CD14-positive monocyte (primary cell): ENCODE measurements at regions of chr10 and their contacts with region 1.

Region 1: GRCh38 chr10:30529373-30529998 is 95.5 kb downstream of the MAP3K8 start:
- DNase-seq: peak; percentile 97 to 99 (median 98)
- H3K4me3 ChIP-seq: peak overlapping the region; percentile 22 to 59 (median 24)
- H3K4me3 Mint-ChIP-seq: peak overlapping the region; percentile 71 to 85
- H3K27ac ChIP-seq: peak overlapping the region; percentile 86 to 99
- H3K27ac Mint-ChIP-seq: peak overlapping the region; percentile 97 to 99 (median 98)
- H3K4me1 ChIP-seq: peaks cover 63 to 83% of the 10 kb centered on the region in 2 donors
- H3K4me1 Mint-ChIP-seq: peaks cover 68% of the 10 kb centered on the region
- H3K27me3 ChIP-seq: no peaks in the 10 kb centered on the region
- H3K27me3 Mint-ChIP-seq: peaks cover 0 to 2% (median 0%) of the 10 kb centered on the region in 3 donors
- CTCF ChIP-seq: no peak

Region 2: DNA sequence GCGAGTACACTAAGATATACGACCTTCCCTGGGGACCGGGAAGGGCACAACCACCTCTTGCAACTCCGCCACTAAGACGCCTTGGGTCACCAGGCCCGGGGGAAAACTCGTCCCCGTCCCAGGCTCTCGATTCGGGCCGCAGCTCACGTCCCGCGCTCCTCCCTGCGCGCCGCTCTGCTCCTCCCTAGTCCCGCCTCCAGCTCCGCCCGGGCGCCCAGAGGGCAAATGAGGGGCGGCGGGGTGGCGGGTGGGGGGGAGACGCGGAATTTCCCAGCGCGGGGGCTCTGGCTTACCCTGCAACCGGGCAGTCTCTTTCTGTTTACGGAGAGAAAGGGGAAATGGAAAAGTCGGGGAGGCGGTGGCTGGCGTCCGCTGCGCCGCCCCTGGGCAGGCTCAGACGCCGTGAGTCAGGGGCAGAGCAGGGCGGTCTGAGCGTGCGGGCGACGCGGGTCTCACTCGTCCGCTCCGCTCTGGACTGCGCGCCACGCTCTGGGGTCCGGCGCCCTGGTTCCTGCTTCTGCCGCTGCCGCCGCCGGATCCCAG is 95.7 kb before region 1 on chr10 and contains the start of gene MAP3K8:
- intact Hi-C with region 1: loop called in 1 of 2 experiments (anchors 5 kb)
- DNase-seq: peak; percentile 96 to 98 (median 98)
- H3K4me3 ChIP-seq: peak within 1 kb of the TSS; percentile 96 to 100 (median 97)
- H3K4me3 Mint-ChIP-seq: peak within 1 kb of the TSS; percentile 98
- H3K27ac ChIP-seq: peak within 1 kb of the TSS; percentile 98 to 99
- H3K27ac Mint-ChIP-seq: peak within 1 kb of the TSS; percentile 95 to 99 (median 98)
- H3K4me1 ChIP-seq: peaks cover 64 to 71% of the 10 kb centered on the region in 2 donors
- H3K4me1 Mint-ChIP-seq: peaks cover 59% of the 10 kb centered on the region
- H3K27me3 ChIP-seq: no peaks in the 10 kb centered on the region
- H3K27me3 Mint-ChIP-seq: peaks cover 0 to 2% (median 0%) of the 10 kb centered on the region in 3 donors
- CTCF ChIP-seq: no peak
- polyA plus RNA-seq, gene MAP3K8: 54.5 to 206 (median 59.2) TPM

Region 3: DNA sequence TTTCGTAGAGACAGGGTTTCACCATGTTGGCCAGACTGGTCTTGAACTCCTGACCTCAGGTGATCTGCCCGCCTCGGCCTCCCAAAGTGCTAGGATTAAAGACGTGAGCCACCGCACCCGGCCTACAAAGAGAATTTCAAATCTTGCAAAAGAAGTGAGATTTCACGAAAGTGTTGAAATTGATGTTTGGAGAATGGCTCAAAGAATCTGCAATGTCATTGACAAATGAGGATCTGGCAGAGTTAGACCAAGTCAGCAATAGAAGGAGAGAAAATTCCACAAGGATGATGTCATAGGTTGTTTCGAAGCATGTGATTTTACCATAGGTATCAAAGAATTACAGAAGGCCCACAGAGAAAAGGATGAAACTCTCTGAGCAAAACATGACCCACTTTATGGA is 28.4 kb after region 1 on chr10:
- intact Hi-C with region 1: no loop called
- DNase-seq: peak; percentile 71 to 96 (median 91)
- H3K4me3 ChIP-seq: peak overlapping the region in 1 of 3 experiments; percentile 5
- H3K4me3 Mint-ChIP-seq: peak overlapping the region; percentile 3 to 20
- H3K27ac ChIP-seq: peak overlapping the region; percentile 76
- H3K27ac Mint-ChIP-seq: peak overlapping the region; percentile 93 to 99 (median 97)
- H3K4me1 ChIP-seq: peaks cover 66 to 80% of the 10 kb centered on the region in 2 donors
- H3K4me1 Mint-ChIP-seq: peaks cover 68% of the 10 kb centered on the region
- H3K27me3 ChIP-seq: no peaks in the 10 kb centered on the region
- H3K27me3 Mint-ChIP-seq: peaks cover 0 to 3% (median 0%) of the 10 kb centered on the region in 3 donors
- CTCF ChIP-seq: no peak